ENCODE measurements at regions of chr20 and their contacts with region 1.

Region 1: DNA sequence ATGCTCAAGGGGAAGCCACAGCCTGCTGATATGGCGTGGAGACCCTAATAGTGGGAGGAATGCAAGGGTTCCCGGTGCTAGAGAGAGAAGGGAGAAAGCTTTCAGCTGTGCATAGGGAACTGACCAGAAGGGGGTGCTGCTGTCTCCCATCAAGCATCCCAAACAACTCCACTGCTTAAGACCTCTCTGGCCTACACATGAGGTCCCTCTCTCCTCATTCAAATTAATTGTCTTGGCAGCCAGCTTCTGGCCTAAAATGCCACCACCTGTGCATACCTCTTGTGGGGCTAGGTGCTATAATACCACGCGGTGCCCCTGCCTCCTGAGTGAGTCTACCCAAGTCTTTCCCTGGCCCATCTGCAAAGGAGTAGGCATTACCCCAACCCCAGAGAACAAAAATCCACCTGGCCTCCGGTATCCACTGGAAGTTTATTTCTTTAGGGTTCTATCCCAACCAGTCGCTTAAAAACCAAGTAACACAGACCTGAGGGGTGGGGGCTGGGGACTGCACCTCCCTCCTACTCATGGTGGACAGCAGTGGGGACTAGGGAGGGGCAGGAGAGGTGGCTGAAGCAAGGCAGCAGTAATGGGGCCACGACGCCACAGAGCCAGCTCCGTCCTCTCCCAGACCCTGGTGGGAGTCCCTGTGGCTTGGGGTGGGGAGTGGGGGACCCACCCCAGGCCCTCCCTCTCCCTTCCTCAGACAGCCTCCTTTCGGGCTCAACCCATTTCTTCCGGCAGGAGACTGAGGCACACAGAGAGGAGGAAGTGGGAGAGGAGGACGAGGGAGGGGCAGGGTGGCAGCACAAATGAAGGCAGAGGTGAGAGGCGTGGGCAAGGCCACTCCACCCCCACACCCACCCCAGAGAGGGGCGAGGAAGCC is 14.2 kb downstream of the ADISSP start:
- DNase-seq: no peak
- ATAC-seq: peak; percentile 64
- H3K4me3 ChIP-seq: no peak overlapping the region
- H3K27ac ChIP-seq: no peak overlapping the region
- H3K4me1 ChIP-seq: no peaks in the 10 kb centered on the region; the same call in 1 of the 2 replicates
- H3K27me3 ChIP-seq: peaks cover 6% of the 10 kb centered on the region
- CTCF ChIP-seq: peak; percentile 92

Region 2: DNA sequence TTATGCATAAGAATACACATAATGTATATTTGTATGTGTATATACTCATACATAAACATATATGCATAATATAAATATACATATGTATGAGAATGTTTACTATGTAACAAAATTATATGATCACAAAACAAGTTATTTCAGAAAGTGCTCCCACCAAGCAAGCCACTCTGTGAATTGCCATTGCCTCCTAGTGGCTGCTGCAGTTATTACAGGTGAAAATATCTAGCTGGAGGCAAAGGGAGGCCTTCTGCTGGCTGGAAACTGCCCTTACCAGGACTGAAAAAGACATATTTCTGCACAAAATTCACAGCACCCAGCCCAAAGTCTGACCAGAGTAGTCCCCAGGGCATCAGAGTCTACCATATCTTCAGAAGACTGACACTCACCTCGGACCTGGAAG is 57.1 kb before region 1 on chr20:
- CTCF ChIA-PET with region 1: interaction called, 11 read pairs
- POLR2A ChIA-PET with region 1: no interaction called
- in situ Hi-C with region 1: no loop called
- intact Hi-C with region 1: no loop called
- DNase-seq: no peak
- ATAC-seq: no peak
- H3K4me3 ChIP-seq: no peak overlapping the region
- H3K27ac ChIP-seq: no peak overlapping the region
- H3K4me1 ChIP-seq: no peaks in the 10 kb centered on the region
- H3K27me3 ChIP-seq: no peaks in the 10 kb centered on the region
- CTCF ChIP-seq: no peak; the same call in 1 of the 2 replicates

Region 3: DNA sequence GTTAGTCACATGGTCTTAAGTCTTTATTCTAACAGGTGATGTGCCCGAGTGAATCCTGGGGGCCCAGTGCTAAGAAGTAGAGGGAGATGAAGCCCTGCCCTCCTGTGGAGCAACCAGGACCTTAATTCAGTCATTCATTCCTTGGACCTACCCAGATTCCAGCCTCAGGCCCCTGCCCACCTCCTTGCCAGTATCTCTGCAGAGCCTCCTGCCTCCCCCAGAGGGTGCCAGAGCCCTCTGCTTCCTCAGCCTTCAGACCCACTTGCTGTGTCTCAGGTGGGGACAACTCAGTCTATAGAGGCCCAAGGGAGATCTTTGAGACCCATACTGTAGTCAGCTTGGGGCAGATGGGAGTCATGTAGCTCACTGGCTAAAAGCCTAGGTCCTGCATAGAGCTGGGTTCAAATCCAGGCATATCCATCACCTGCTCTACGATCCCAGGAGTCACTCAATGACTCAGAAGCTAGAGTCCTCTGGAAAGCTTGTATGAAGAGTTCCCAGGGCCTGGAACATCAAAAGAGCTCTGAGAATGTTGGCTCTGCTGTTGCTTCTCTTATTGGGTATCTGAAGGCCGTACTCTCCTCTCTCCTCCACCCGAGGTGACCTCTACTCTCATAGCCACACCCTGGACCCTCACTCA is 37.0 kb before region 1 on chr20:
- CTCF ChIA-PET with region 1: interaction called, 10 read pairs
- POLR2A ChIA-PET with region 1: no interaction called
- in situ Hi-C with region 1: no loop called
- intact Hi-C with region 1: no loop called
- DNase-seq: no peak
- ATAC-seq: peak; percentile 92
- H3K4me3 ChIP-seq: no peak overlapping the region
- H3K27ac ChIP-seq: no peak overlapping the region
- H3K4me1 ChIP-seq: no peaks in the 10 kb centered on the region
- H3K27me3 ChIP-seq: no peaks in the 10 kb centered on the region
- CTCF ChIP-seq: peak; percentile 90

Region 4: DNA sequence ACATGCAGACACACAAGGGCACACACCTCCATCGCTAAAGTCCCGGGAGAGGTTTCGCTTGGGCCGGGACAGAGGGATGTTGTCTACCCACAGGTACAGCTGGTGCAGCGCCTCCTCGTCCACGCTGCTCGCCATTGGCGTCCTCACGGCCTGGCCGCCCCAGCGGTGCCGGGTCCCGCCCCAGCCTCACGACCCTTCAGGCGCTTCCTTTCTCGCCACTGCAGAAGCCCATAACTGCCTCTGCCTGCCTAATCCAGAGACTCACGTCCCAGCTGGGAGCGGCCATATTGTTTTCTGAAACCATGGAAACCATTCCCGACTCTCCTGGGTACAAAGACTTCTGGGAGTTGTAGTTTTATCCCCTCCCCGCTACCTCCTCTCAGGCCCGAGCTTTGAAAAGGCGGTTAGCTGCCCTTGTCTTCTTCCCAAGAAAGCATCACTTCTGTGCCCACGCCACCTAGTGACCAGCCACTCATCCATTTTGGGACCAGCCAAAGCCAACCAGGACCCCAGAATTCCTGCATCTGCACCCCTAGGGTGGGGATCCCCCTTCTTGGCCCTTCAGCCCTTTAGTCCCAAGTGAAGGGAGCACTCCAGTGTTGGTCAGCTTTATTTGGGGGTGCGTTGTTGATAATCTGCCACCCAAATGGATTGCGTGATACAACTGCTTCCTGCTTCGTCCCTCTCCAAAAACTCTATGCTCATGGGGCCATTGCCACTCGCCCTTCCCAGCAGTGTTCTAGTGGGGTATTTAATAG is 28.0 kb after region 1 on chr20 and contains the start of gene SPEF1:
- CTCF ChIA-PET with region 1: interaction called, 9 read pairs
- POLR2A ChIA-PET with region 1: interaction called, 11 read pairs
- in situ Hi-C with region 1: no loop called
- intact Hi-C with region 1: loop called (anchors 1 kb)
- DNase-seq: peak; percentile 91
- ATAC-seq: peak; percentile 88
- H3K4me3 ChIP-seq: peak within 1 kb of the TSS; percentile 48 to 58
- H3K27ac ChIP-seq: no peak within 1 kb of the TSS
- H3K4me1 ChIP-seq: peaks cover 17% of the 10 kb centered on the region
- H3K27me3 ChIP-seq: no peaks in the 10 kb centered on the region
- CTCF ChIP-seq: peak; percentile 90
- total RNA-seq, gene SPEF1: 0.41 TPM

Region 5: GRCh38 chr20:3786665-3787323 is 33.5 kb after region 1 on chr20 and contains the start of gene CENPB:
- CTCF ChIA-PET with region 1: interaction called, 9 read pairs
- POLR2A ChIA-PET with region 1: interaction called, 11 read pairs
- in situ Hi-C with region 1: no loop called
- intact Hi-C with region 1: loop called (anchors 1 kb)
- DNase-seq: no peak
- ATAC-seq: peak; percentile 89
- H3K4me3 ChIP-seq: peak within 1 kb of the TSS; percentile 65 to 75
- H3K27ac ChIP-seq: peak within 1 kb of the TSS; percentile 87
- H3K4me1 ChIP-seq: peaks cover 21% of the 10 kb centered on the region
- H3K27me3 ChIP-seq: no peaks in the 10 kb centered on the region
- CTCF ChIP-seq: peak; percentile 98
- total RNA-seq, gene CENPB: 154 TPM

Region 6: GRCh38 chr20:4026093-4026601 is 272.8 kb after region 1 on chr20:
- CTCF ChIA-PET with region 1: no interaction called
- POLR2A ChIA-PET with region 1: no interaction called
- in situ Hi-C with region 1: no loop called
- intact Hi-C with region 1: no loop called
- DNase-seq: no peak
- ATAC-seq: peak; percentile 78
- H3K4me3 ChIP-seq: no peak overlapping the region
- H3K27ac ChIP-seq: no peak overlapping the region
- H3K4me1 ChIP-seq: no peaks in the 10 kb centered on the region
- H3K27me3 ChIP-seq: no peaks in the 10 kb centered on the region; the same call in 1 of the 2 replicates
- CTCF ChIP-seq: peak; percentile 27; the same call in 1 of the 2 replicates

Measured in Panc1 (cell line).